AG04449 (cell line): ENCODE measurements at regions of chr2 and their contacts with region 1.

Region 1: DNA sequence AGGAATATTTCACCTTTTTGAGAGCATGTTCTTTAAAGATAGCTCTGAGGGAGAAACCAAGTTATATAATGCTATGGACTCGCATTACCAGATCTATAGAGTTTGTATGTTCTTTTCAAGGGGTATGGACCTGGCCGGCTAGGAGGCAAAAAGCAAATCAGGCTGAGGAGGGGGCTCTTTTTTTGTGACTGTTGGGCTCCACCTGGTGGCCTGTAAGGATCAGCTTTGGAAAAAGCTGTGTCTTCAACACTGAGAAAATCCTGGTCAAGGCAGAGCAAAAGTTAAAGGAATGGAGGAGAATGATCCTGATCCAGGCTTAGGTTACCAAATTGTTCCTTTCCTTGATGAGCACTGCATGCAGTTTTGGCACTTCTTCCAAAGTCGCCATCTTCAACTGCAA is 180.5 kb downstream of the DIS3L2 start:
- DNase-seq: no peak
- H3K4me3 ChIP-seq: no peak overlapping the region
- CTCF ChIP-seq: peak; percentile 58

Region 2: GRCh38 chr2:231910771-231911170 is 231.3 kb before region 1 on chr2:
- CTCF ChIA-PET with region 1: interaction called, 17 read pairs
- POLR2A ChIA-PET with region 1: no interaction called
- DNase-seq: no peak
- H3K4me3 ChIP-seq: no peak overlapping the region
- CTCF ChIP-seq: no peak

Region 3: DNA sequence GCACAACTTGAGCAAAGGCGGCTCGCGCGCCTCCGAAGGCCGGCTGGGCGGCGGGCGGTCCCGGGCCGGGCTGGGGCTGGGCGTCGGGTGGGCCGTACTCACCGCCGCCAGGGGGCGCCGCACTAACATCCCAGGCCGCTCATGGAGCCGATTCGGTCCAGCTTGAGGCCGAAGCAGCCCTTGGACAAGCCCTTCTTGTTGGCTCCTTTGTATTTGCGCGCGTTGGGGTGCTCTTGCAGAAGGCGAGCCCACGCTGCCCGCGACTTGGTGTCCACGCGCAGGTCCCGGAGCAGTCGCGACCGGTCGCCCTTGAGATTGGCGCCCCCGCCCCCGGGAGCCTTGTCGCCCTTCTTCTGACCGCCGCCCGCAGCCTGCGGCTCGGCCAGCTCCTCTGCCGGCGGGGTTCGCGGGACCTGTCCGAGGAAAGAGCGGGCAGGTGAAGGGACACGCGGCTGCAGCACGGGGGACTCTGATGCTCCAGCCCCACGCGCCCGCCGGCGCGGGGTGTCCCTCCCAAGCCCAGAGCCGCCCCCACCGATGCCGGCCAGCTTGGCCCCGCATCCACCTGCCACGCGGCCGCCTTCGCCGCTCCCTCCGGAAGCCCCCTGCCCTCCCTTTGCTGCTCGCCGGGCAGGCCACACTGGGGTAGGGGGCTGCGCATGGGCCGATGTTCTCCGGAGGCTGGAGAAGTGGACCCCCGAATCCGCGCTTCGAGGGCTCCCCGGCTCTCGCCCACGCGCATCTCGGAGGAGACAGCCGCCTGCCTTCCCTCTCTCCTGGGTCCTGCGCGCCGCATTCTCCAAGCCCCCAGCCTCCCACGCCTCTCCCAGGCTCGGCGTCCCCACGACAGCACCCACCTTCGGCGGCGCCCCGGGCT is 216.5 kb before region 1 on chr2:
- CTCF ChIA-PET with region 1: interaction called, 107 read pairs
- POLR2A ChIA-PET with region 1: no interaction called
- DNase-seq: peak; percentile 28
- H3K4me3 ChIP-seq: peak overlapping the region; percentile 46
- CTCF ChIP-seq: peak; percentile 87

Region 4: GRCh38 chr2:232126301-232127099 is 15.5 kb before region 1 on chr2:
- CTCF ChIA-PET with region 1: interaction called, 14 read pairs
- POLR2A ChIA-PET with region 1: no interaction called
- DNase-seq: no peak
- H3K4me3 ChIP-seq: no peak overlapping the region
- CTCF ChIP-seq: no peak